HepG2 (cell line): ENCODE measurements at regions of chr4 and their contacts with region 1.

Region 1: DNA sequence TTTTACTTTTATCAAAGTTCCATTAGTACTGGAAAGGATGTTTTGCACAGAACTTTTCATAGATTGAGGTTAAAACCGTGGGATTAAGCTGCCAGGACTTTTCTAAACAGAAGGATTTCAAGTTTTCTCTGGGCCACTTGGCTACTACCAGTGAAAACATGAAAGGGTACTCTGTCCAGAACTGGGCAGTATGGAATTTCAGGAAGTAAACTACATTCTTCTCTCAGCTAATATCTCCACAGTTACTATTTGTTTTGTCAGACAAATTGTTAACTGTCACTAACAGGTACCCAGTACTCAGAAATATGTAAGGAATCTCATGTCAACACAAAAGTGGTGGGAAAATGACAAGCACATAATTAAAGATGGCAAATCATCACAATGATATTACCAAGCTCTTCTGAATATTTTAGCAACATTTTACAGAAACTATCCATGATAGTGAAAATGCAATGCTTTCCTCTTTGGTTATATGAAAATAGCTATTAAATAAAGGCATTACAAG is 454.4 kb downstream of the C4orf33 start:
- DNase-seq: peak; percentile 47
- ATAC-seq: peak; percentile 75
- H3K4me3 ChIP-seq: no peak overlapping the region
- H3K27ac ChIP-seq: no peak overlapping the region
- H3K4me1 ChIP-seq: peaks cover 9% of the 10 kb centered on the region
- H3K27me3 ChIP-seq: no peaks in the 10 kb centered on the region
- CTCF ChIP-seq: no peak
- EP300 ChIP-seq: no peak
- POLR2A ChIP-seq: no peak
- RAD21 ChIP-seq: no peak

Region 2: GRCh38 chr4:128386761-128387599 is 1163.4 kb before region 1 on chr4:
- CTCF ChIA-PET with region 1: no interaction called
- POLR2A ChIA-PET with region 1: no interaction called
- in situ Hi-C with region 1: no loop called
- intact Hi-C with region 1: loop called (anchors 5 kb)
- DNase-seq: no peak
- ATAC-seq: no peak
- H3K4me3 ChIP-seq: no peak overlapping the region
- H3K27ac ChIP-seq: no peak overlapping the region
- H3K4me1 ChIP-seq: no peaks in the 10 kb centered on the region
- H3K27me3 ChIP-seq: no peaks in the 10 kb centered on the region; a peak in 1 of 5 replicates
- CTCF ChIP-seq: no peak
- EP300 ChIP-seq: no peak
- POLR2A ChIP-seq: no peak
- RAD21 ChIP-seq: no peak